GM12878 (cell line): ENCODE measurements at regions of chr12 and their contacts with region 1.

Region 1: DNA sequence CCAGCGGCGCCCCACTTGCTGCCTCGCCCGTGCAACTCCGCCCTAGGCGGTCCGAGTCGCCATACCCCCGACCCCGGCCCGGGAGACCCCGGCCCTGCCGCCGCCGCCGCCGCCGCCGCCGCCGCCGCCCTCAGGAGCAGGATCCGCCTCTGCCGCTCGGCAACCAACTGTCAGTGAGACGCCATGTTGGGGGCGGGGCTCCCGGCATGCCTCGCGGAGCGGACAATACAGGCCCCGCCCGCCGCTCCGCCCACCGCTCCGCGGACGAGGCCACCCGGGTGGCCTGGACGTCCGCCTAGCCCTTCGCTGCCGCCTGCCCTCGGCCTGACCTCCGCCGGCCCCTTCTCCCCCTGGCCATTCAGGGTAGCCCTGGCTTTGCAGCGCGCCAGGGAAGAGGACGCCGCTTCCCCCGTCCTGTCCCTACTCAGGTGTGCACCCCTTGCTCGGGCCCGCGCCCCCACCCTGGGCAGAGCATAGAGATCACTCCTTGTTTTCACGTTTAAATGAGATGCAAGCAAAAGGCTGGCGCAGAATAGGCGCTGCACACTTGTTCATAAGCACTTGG is at the start of gene HECTD4:
- DNase-seq: peak; percentile 34
- ATAC-seq: peak; percentile 96
- H3K4me3 ChIP-seq: peak within 1 kb of the TSS; percentile 98
- H3K27ac ChIP-seq: peak within 1 kb of the TSS; percentile 82
- H3K4me1 ChIP-seq: no peaks in the 10 kb centered on the region; the same call in 1 of the 2 replicates
- H3K27me3 ChIP-seq: no peaks in the 10 kb centered on the region
- CTCF ChIP-seq: no peak
- EP300 ChIP-seq: no peak
- POLR2A ChIP-seq: peak; percentile 92
- RAD21 ChIP-seq: no peak
- polyA plus RNA-seq, gene HECTD4: 5.8 to 17.1 TPM

Region 2: DNA sequence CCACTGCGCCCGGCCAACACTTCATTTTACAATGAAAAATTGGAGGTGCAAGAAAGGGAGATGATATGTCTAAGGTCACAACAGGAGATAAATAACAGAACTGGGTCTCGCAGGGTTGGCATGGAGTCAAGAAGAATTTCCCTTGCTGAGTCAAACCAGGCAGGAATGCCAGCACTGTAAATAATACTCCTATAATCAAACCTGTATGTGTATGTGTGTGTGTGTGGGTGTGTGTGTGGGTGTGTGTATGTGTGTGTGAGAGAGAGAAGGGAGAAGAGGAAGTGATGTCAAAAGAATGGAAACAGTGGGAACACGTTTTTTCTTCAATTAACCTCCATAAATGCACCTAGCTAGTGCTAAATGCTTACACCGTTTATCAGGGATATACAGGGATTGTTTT is 439.8 kb before region 1 on chr12:
- CTCF ChIA-PET with region 1: interaction called, 34 read pairs
- POLR2A ChIA-PET with region 1: interaction called, 5 read pairs
- RAD21 ChIA-PET with region 1: interaction called, 27 read pairs
- SMC1A ChIA-PET with region 1: interaction called, 18 read pairs
- in situ Hi-C with region 1: loop called (anchors 10 kb)
- intact Hi-C with region 1: loop called (anchors 1 kb)
- DNase-seq: no peak
- ATAC-seq: no peak
- H3K4me3 ChIP-seq: no peak overlapping the region
- H3K27ac ChIP-seq: no peak overlapping the region
- H3K4me1 ChIP-seq: no peaks in the 10 kb centered on the region; the same call in 1 of the 2 replicates
- H3K27me3 ChIP-seq: no peaks in the 10 kb centered on the region
- CTCF ChIP-seq: no peak
- EP300 ChIP-seq: no peak
- POLR2A ChIP-seq: no peak
- RAD21 ChIP-seq: no peak

Region 3: GRCh38 chr12:112046003-112046402 is 336.3 kb before region 1 on chr12:
- CTCF ChIA-PET with region 1: no interaction called
- POLR2A ChIA-PET with region 1: no interaction called
- RAD21 ChIA-PET with region 1: no interaction called
- SMC1A ChIA-PET with region 1: interaction called, 3 read pairs
- in situ Hi-C with region 1: no loop called
- intact Hi-C with region 1: loop called (anchors 10 kb)
- DNase-seq: no peak
- ATAC-seq: no peak
- H3K4me3 ChIP-seq: no peak overlapping the region
- H3K27ac ChIP-seq: no peak overlapping the region
- H3K4me1 ChIP-seq: no peaks in the 10 kb centered on the region
- H3K27me3 ChIP-seq: no peaks in the 10 kb centered on the region
- CTCF ChIP-seq: no peak
- EP300 ChIP-seq: no peak
- POLR2A ChIP-seq: no peak
- RAD21 ChIP-seq: no peak

Region 4: DNA sequence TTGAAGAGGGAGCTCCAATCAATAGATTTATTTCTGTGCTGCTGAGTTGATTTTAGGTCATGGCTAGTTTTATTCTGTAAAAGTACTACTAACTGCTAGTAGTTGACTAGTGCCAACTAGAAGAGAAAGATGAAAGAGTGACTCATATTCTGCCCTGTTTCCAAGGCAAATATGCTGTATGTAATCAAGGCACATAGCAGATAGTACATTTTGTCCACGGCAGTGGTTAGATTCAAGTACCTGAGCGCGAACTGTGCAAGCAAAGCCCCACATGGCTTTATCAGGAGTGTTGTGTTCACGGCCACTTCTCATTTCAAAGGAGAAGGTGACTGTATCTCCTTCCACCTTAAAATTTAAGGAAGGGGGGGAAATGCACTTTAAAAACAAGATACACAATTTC is 130.1 kb before region 1 on chr12:
- CTCF ChIA-PET with region 1: interaction called, 6 read pairs
- POLR2A ChIA-PET with region 1: no interaction called
- RAD21 ChIA-PET with region 1: interaction called, 7 read pairs
- SMC1A ChIA-PET with region 1: interaction called, 10 read pairs
- in situ Hi-C with region 1: no loop called
- intact Hi-C with region 1: no loop called
- DNase-seq: no peak
- ATAC-seq: no peak
- H3K4me3 ChIP-seq: no peak overlapping the region
- H3K27ac ChIP-seq: no peak overlapping the region
- H3K4me1 ChIP-seq: no peaks in the 10 kb centered on the region
- H3K27me3 ChIP-seq: no peaks in the 10 kb centered on the region
- CTCF ChIP-seq: no peak
- EP300 ChIP-seq: no peak
- POLR2A ChIP-seq: no peak
- RAD21 ChIP-seq: no peak

Region 5: GRCh38 chr12:112283546-112283945 is 98.8 kb before region 1 on chr12:
- CTCF ChIA-PET with region 1: interaction called, 4 read pairs
- POLR2A ChIA-PET with region 1: interaction called, 4 read pairs
- RAD21 ChIA-PET with region 1: interaction called, 3 read pairs
- SMC1A ChIA-PET with region 1: interaction called, 10 read pairs
- in situ Hi-C with region 1: no loop called
- intact Hi-C with region 1: loop called (anchors 10 kb)
- DNase-seq: no peak
- ATAC-seq: no peak
- H3K4me3 ChIP-seq: no peak overlapping the region
- H3K27ac ChIP-seq: no peak overlapping the region
- H3K4me1 ChIP-seq: no peaks in the 10 kb centered on the region
- H3K27me3 ChIP-seq: no peaks in the 10 kb centered on the region
- CTCF ChIP-seq: no peak
- EP300 ChIP-seq: no peak
- POLR2A ChIP-seq: no peak
- RAD21 ChIP-seq: no peak

Region 6: GRCh38 chr12:112303004-112303403 is 79.3 kb before region 1 on chr12:
- CTCF ChIA-PET with region 1: interaction called, 10 read pairs
- POLR2A ChIA-PET with region 1: no interaction called
- RAD21 ChIA-PET with region 1: interaction called, 4 read pairs
- SMC1A ChIA-PET with region 1: interaction called, 7 read pairs
- in situ Hi-C with region 1: no loop called
- intact Hi-C with region 1: loop called (anchors 2 kb)
- DNase-seq: peak; percentile 91
- ATAC-seq: peak; percentile 100
- H3K4me3 ChIP-seq: no peak overlapping the region
- H3K27ac ChIP-seq: peak overlapping the region; percentile 91
- H3K4me1 ChIP-seq: peaks cover 16% of the 10 kb centered on the region
- H3K27me3 ChIP-seq: no peaks in the 10 kb centered on the region
- CTCF ChIP-seq: no peak
- EP300 ChIP-seq: peak; percentile 55 to 65; a peak in 3 of 4 replicates
- POLR2A ChIP-seq: peak; percentile 59
- RAD21 ChIP-seq: no peak; the same call in 1 of the 2 replicates

Region 7: GRCh38 chr12:112409064-112409905 is 27.0 kb after region 1 on chr12 and contains the start of gene RPL6:
- CTCF ChIA-PET with region 1: interaction called, 13 read pairs
- POLR2A ChIA-PET with region 1: no interaction called
- RAD21 ChIA-PET with region 1: interaction called, 3 read pairs
- SMC1A ChIA-PET with region 1: interaction called, 8 read pairs
- in situ Hi-C with region 1: no loop called
- intact Hi-C with region 1: no loop called
- DNase-seq: peak; percentile 79
- ATAC-seq: peak; percentile 88
- H3K4me3 ChIP-seq: peak within 1 kb of the TSS; percentile 95
- H3K27ac ChIP-seq: peak within 1 kb of the TSS; percentile 97
- H3K4me1 ChIP-seq: no peaks in the 10 kb centered on the region
- H3K27me3 ChIP-seq: no peaks in the 10 kb centered on the region; a peak in 1 of 4 replicates
- CTCF ChIP-seq: no peak
- EP300 ChIP-seq: no peak
- POLR2A ChIP-seq: peak; percentile 94
- RAD21 ChIP-seq: no peak
- polyA plus RNA-seq, gene RPL6: 1,828 to 2,204 TPM